ENCODE measurements at regions of chr10 and their contacts with region 1.

Region 1: DNA sequence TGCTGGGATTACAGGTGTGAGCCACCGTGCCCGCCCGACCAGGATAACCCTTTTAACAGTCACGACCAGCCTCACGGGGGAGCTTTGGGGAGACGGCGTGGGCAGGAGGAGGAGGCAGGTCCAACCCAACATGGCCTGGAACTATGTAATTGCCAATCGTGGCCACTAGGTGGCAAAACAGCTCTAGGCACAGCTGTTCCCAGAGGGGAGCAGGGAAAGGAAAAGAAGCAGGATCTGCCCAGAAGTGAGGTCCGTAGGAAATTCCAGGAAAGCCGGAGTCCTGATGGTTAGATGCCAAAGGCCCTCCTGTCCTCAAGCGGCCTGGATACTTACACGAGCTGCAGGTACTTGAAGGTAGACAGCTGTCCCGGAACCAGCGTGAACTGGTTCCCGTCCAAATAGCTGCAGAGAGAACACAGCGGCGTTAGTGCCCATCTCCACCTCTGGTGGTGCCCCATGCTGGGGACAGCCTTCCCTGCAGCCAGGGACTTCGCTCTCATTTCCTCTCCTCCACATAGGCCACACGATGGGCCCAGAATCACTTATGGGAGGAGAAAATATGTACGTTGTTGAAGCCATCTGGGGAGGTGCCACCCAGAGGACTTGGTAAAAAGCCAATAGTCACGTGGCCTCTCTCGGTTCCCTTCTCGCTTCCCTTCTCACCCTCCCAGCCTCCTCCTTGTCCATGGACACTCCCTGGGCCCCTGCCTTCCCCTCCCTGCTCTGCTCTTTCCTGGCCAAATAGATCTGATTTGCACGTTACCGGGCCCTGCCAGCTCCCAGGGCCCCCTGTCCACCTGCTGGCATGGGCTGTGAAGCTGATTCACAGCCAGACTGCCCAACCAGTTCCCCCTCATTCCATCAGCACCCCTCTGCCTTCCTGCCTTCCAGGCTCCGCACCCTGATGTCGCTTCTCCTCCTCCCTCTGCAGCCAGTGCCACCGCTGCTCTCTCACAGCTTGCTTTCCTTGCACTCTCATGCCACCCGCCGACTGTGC is 148.1 kb downstream of the SLIT1 start:
- DNase-seq: peak; percentile 53
- H3K4me3 ChIP-seq: peak overlapping the region; percentile 30
- CTCF ChIP-seq: peak; percentile 85

Region 2: GRCh38 chr10:96984541-96985131 is 53.0 kb before region 1 on chr10:
- in situ Hi-C with region 1: loop called (anchors 5 kb)
- DNase-seq: no peak
- H3K4me3 ChIP-seq: no peak overlapping the region
- CTCF ChIP-seq: no peak

Region 3: GRCh38 chr10:96998329-96998888 is 39.3 kb before region 1 on chr10:
- in situ Hi-C with region 1: no loop called
- DNase-seq: peak; percentile 54
- H3K4me3 ChIP-seq: no peak overlapping the region
- CTCF ChIP-seq: no peak

Measured in astrocyte of the cerebellum (primary cell).